B cell (primary cell): ENCODE measurements at regions of chrX and their contacts with region 1.

Region 1: DNA sequence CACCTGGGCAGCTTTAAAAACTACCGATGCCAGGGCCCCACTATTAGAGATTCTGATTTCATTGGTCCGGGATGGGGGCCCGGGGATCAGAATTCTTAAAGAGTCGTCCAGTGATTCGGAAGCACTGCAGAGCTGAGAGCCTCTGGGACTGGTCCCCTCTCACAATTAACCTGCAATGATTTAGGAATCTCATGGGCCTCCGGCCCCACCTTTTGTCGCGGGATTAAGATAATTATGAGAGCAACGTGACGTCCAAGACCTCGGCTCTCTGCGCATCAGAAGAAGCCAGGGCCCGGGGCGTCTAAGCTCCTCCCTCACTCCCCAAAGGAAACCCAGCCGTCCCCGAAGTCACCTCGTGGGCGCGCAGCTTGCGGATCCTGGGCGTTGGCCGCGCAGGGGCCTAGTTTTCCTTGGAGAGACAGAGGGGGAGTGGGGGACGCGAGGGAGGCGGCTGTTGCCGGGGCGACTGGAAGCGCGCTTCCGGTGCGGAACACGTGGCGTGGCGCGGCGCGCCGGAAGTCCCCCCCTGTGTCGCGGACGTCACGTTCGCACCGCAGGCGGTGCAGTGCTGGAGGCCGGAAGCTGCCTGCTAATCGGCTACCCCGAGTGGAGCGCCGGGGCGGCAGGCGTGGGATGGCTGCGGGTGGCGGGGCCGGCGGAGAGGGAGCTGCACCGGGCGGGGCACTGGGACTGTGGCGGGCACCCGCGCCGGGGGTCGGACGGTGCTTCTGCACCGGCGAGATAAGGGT is at the start of gene GEMIN8:
- DNase-seq: peak; percentile 90
- ATAC-seq: peak; percentile 93
- H3K4me3 ChIP-seq: peak within 1 kb of the TSS; percentile 67 to 92 (median 80)
- H3K4me3 Mint-ChIP-seq: peak within 1 kb of the TSS; percentile 96
- H3K27ac ChIP-seq: peak within 1 kb of the TSS; percentile 82 to 93
- H3K27ac Mint-ChIP-seq: peak within 1 kb of the TSS; percentile 98
- H3K4me1 ChIP-seq: peaks cover 17 to 23% of the 10 kb centered on the region in 2 donors
- H3K4me1 Mint-ChIP-seq: peaks cover 28% of the 10 kb centered on the region
- H3K27me3 ChIP-seq: peaks cover 0 to 13% (median 0%) of the 10 kb centered on the region in 4 experiments
- H3K27me3 Mint-ChIP-seq: no peaks in the 10 kb centered on the region
- CTCF ChIP-seq: no peak
- total RNA-seq, gene GEMIN8: 17.7 and 20.6 TPM in 2 replicates

Region 2: DNA sequence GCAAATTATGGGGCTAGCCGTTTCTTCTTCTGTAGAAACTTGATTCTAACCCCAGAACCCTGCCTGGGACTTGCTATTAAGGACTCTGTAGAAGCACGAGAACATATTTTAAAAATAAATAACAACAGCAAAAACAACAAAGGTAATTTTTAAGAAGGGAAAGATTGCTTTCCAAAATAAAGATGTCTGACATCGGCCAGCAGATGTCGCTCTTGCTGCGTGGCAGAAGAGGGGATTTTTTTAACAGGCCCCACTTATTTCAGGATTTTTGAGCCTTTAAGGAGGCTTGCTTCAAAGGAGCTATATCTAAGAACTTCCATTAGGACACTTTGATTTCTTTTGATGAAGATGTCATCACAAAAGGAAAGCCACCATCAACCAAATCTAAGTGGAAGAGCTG is 523.0 kb before region 1 on chrX:
- CTCF ChIA-PET with region 1: interaction called, 76 read pairs
- POLR2A ChIA-PET with region 1: no interaction called
- intact Hi-C with region 1: no loop called
- DNase-seq: peak; percentile 58
- ATAC-seq: no peak
- H3K4me3 ChIP-seq: no peak overlapping the region
- H3K4me3 Mint-ChIP-seq: no peak overlapping the region
- H3K27ac ChIP-seq: no peak overlapping the region
- H3K27ac Mint-ChIP-seq: no peak overlapping the region
- H3K4me1 ChIP-seq: no peaks in the 10 kb centered on the region
- H3K4me1 Mint-ChIP-seq: no peaks in the 10 kb centered on the region
- H3K27me3 ChIP-seq: no peaks in the 10 kb centered on the region
- H3K27me3 Mint-ChIP-seq: no peaks in the 10 kb centered on the region
- CTCF ChIP-seq: peak; percentile 79

Region 3: DNA sequence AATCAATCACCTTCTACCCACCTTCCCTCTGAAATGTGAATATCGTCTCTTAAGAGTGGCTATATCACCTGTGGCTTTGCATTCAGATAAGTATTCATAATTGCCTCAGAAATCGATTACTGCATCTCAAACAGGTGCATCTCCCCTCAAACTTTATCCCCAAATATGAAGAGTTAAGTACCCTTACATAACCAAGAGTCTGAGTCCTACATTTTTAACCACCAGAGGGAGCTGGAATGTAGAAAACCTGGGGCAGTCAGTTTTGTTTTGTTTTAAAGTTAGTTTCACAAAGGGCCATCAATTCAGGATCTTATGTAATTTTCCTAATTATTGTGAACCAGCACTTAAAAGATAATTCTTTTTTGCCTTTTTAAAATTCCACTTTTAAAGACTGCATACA is 371.0 kb before region 1 on chrX:
- CTCF ChIA-PET with region 1: interaction called, 6 read pairs
- POLR2A ChIA-PET with region 1: no interaction called
- intact Hi-C with region 1: loop called (anchors 1 kb)
- DNase-seq: peak; percentile 70
- ATAC-seq: no peak
- H3K4me3 ChIP-seq: no peak overlapping the region
- H3K4me3 Mint-ChIP-seq: no peak overlapping the region
- H3K27ac ChIP-seq: peak overlapping the region in 1 of 2 donors; percentile 25
- H3K27ac Mint-ChIP-seq: peak overlapping the region; percentile 61
- H3K4me1 ChIP-seq: peaks cover 8 to 9% of the 10 kb centered on the region in 2 donors
- H3K4me1 Mint-ChIP-seq: peaks cover 12% of the 10 kb centered on the region
- H3K27me3 ChIP-seq: no peaks in the 10 kb centered on the region
- H3K27me3 Mint-ChIP-seq: no peaks in the 10 kb centered on the region
- CTCF ChIP-seq: peak; percentile 62

Region 4: DNA sequence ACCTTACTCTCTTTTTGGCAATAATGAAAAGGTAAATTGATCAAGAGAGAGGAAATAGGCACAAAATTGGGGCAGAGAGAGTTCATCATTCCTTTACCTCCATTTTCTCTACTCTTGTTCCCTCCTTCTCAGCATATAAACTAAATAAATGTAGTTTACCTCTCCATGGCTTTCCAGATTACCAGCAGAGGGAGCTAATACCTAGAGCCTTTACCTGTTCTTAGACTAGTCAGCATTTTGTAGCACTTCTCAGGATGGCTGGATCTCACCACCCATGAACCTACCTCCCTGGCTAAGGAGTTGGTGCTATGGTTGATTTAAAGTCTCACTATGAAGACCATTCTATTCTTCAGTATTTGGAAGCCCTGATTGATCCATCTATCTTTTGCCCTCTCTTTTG is 279.4 kb before region 1 on chrX:
- CTCF ChIA-PET with region 1: interaction called, 15 read pairs
- POLR2A ChIA-PET with region 1: no interaction called
- intact Hi-C with region 1: loop called (anchors 1 kb)
- DNase-seq: peak; percentile 55
- ATAC-seq: peak; percentile 28
- H3K4me3 ChIP-seq: no peak overlapping the region
- H3K4me3 Mint-ChIP-seq: no peak overlapping the region
- H3K27ac ChIP-seq: peak overlapping the region in 1 of 2 donors; percentile 27
- H3K27ac Mint-ChIP-seq: peak overlapping the region; percentile 41
- H3K4me1 ChIP-seq: peaks cover 31 to 32% of the 10 kb centered on the region in 2 donors
- H3K4me1 Mint-ChIP-seq: peaks cover 44% of the 10 kb centered on the region
- H3K27me3 ChIP-seq: no peaks in the 10 kb centered on the region
- H3K27me3 Mint-ChIP-seq: no peaks in the 10 kb centered on the region
- CTCF ChIP-seq: peak; percentile 48

Region 5: GRCh38 chrX:14235004-14235403 is 205.4 kb after region 1 on chrX:
- CTCF ChIA-PET with region 1: no interaction called
- POLR2A ChIA-PET with region 1: no interaction called
- intact Hi-C with region 1: no loop called
- DNase-seq: no peak
- ATAC-seq: no peak
- H3K4me3 ChIP-seq: no peak overlapping the region
- H3K4me3 Mint-ChIP-seq: no peak overlapping the region
- H3K27ac ChIP-seq: no peak overlapping the region
- H3K27ac Mint-ChIP-seq: no peak overlapping the region
- H3K4me1 ChIP-seq: no peaks in the 10 kb centered on the region
- H3K4me1 Mint-ChIP-seq: no peaks in the 10 kb centered on the region
- H3K27me3 ChIP-seq: no peaks in the 10 kb centered on the region
- H3K27me3 Mint-ChIP-seq: no peaks in the 10 kb centered on the region
- CTCF ChIP-seq: no peak

Region 6: GRCh38 chrX:15335135-15336022 is 1305.8 kb after region 1 on chrX and contains the start of gene PIGA:
- CTCF ChIA-PET with region 1: no interaction called
- POLR2A ChIA-PET with region 1: no interaction called
- intact Hi-C with region 1: loop called (anchors 1 kb)
- DNase-seq: peak; percentile 94
- ATAC-seq: peak; percentile 91
- H3K4me3 ChIP-seq: peak within 1 kb of the TSS; percentile 65 to 93 (median 74)
- H3K4me3 Mint-ChIP-seq: peak within 1 kb of the TSS; percentile 92
- H3K27ac ChIP-seq: peak within 1 kb of the TSS; percentile 84 to 95
- H3K27ac Mint-ChIP-seq: peak within 1 kb of the TSS; percentile 94
- H3K4me1 ChIP-seq: peaks cover 4 to 15% of the 10 kb centered on the region in 2 donors
- H3K4me1 Mint-ChIP-seq: peaks cover 20% of the 10 kb centered on the region
- H3K27me3 ChIP-seq: peaks cover 0 to 15% (median 1%) of the 10 kb centered on the region in 4 experiments
- H3K27me3 Mint-ChIP-seq: peaks cover 8% of the 10 kb centered on the region
- CTCF ChIP-seq: no peak
- total RNA-seq, gene PIGA: 25.7 and 26.0 TPM in 2 replicates